ENCODE measurements at regions of chr12 and their contacts with region 1.

Region 1: DNA sequence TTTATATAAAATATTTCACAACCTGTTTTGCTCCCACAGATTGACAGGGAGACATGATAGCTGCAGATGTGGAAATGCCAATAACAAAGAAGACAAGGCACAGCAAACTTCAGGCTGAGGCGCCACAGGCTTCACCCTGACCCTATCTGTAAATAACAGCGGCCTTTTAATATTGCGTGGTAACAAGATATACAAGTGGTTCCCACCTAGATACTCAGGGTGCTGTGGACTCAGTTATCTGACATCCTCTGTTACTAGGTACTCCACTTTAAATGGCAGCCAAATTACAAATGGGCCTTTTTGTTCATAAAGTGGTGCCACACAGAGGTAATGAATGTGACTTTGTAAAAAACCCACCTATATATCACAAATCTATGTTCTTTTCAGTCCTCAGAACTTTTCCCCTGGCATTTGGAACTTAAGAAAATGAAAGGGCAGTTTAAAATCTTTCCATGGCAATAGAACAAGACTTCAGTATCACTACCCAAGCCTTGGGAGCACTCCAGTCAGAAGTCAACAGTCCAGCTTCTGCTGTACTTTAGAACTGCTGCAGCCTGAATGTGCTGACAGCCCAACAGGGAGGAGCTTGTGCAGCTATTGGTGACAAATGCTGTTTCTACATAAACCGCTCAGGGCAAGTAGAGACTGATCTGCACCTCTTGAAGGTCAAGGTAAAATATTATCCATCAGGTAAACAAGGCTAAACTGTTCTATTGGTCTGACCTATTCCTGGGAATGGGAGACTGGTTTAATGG is 86.2 kb upstream of the DCD start:
- DNase-seq: no peak
- H3K4me3 Mint-ChIP-seq: no peak overlapping the region
- H3K27ac Mint-ChIP-seq: no peak overlapping the region
- H3K4me1 Mint-ChIP-seq: peaks cover 39% of the 10 kb centered on the region
- H3K27me3 Mint-ChIP-seq: peaks cover 5% of the 10 kb centered on the region

Region 2: DNA sequence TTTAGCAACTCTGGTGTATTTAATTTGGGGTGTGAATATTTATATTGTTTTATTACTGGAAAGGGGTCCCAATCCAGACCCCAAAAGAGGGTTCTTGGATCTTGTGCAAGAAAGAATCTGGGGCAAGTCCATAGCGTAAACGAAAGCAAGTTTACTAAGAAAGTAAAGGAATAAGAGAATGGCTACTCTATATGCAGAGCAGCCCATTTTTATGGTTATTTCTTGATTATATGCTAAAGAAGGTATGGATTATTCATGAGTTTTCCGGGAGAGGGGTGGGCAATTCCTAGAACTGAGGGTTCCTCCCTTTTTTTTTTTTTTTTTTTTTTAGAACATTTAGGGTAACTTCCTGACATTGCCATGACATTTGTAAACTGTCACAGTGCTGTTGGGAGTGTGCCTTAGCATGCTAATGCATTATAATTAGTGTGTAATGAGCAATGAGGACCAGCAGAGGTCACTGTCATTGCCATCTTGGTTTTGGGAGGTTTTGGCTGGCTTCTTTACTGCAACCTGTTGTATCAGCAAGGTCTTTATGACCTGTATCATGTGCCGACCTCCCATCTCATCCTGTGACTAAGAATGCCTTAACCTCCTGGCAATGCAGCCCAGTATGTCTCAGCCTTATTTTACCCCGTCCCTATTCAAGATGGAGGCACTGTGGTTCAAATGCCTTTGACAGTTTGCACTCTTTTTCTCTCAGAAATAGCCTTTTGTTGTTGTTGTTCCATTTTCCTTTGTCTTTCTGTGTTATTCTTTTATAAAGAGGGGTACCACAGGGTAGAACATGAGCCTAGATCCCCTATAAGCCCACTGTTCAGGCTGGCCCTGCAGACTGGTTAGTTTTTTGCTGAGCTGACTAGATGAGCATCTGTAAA is 10.8 kb before region 1 on chr12:
- CTCF ChIA-PET with region 1: interaction called, 16 read pairs
- POLR2A ChIA-PET with region 1: interaction called, 3 read pairs
- DNase-seq: peak; percentile 42
- H3K4me3 Mint-ChIP-seq: no peak overlapping the region
- H3K27ac Mint-ChIP-seq: no peak overlapping the region
- H3K4me1 Mint-ChIP-seq: peaks cover 9% of the 10 kb centered on the region
- H3K27me3 Mint-ChIP-seq: peaks cover 25% of the 10 kb centered on the region